ENCODE measurements at regions of chr1 and their contacts with region 1.

Region 1: DNA sequence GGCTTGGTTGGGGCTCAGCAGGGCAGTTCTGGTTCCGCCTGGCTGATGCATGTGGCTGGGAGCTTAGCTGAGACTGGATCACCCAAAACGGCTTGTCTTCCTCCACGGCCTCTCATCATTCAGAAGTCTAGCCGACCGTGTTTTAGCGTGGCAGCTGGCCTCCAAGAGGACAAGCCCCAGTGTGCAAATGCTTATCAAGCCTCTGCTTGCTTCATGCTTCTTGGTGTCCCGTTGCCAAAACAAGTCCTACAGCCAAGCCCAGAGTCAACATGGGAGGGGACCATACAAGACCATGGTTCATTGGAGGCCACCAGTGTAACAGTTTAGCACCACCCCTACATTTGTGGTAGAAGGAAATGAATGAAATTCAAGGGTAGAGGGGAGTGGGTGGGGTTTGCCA is 10.5 kb upstream of the KDF1 start:
- DNase-seq: no peak
- H3K4me3 ChIP-seq: no peak overlapping the region
- H3K27ac ChIP-seq: no peak overlapping the region
- H3K4me1 ChIP-seq: no peaks in the 10 kb centered on the region
- H3K27me3 ChIP-seq: peaks cover 0 to 47% of the 10 kb centered on the region in 2 donors
- CTCF ChIP-seq: no peak

Region 2: DNA sequence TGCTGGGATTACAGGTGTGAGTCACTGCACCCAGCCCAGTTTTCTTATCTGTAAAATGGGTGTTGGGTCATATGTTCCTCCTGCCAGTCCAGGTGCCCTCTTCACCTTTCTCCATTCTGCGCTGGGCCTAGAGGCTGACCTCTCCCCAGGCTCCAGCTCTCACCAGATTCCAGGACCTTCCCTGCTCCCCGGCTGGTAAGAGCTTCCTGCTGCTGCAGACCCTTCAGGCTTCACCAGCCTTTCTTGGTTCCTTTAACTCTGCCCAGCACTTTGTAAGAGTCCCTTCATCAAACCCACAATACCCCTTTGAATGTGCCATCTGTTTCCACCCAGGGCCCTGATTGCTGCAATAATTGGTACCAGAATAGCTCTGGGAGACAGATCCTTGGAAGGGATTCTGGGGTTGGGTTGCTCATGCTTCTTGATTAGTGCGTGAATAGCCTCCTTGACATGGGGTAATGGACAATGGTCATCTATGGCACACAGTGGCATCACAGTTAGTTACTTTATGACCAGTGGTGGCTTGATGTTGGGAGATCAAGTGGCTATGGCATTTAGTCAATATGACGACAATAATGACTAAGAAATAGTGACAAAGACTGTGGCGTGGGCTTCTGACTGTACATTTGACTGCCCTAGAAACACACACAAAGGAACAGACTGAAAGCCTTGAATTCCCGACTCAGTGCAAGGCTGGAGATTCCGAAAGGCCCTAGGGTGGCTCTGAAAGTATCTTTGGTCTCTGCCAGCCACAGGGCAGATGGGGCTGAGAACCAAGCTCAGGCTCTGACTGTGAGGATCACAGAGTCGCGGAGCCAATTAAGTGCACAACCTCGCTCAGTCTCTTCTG is 116.8 kb after region 1 on chr1:
- intact Hi-C with region 1: loop called (anchors 5 kb)
- DNase-seq: no peak
- H3K4me3 ChIP-seq: no peak overlapping the region
- H3K27ac ChIP-seq: no peak overlapping the region
- H3K4me1 ChIP-seq: no peaks in the 10 kb centered on the region
- H3K27me3 ChIP-seq: peaks cover 0 to 8% of the 10 kb centered on the region in 2 donors
- CTCF ChIP-seq: no peak

Region 3: DNA sequence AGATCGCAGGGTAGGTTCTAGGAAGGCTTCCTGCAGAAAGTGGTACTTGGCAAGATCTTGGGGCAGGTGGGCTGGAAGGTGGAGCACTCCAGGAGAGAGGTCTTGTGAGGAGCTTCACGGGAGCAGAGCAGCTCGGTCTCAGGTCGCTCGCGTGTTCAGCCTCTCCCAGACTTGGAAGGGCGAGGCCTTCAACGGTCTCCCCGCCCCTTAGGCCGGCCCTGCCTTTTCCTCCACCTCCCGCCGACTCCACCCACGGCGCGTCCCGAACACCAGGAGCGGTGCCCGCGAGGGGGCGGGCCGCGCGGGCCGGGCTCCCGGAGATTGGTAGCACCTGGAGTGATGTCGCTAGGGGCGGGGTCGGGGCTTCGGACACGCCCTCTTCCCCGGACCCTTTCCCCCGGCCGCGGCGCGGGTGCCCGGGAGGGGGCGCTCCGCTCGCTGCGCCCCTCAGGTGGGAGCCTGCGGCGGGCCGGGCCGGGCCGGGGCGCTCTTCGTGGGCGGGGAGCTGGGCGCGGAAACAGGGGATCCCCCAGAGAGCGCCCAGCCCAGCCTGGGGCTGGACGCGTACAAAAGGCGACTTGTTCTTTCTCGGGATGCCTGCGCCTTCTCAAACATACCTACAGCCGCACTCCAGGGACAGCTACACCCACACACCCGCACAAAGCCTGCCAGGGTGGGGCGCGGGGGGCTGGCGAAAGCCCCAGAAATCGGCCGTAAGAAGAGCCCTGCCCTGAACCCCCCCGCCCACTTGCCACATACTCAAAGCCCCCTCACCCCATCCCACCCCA is 597.7 kb after region 1 on chr1:
- intact Hi-C with region 1: no loop called
- DNase-seq: peak; percentile 96 to 99
- H3K4me3 ChIP-seq: peak overlapping the region; percentile 43 to 53
- H3K27ac ChIP-seq: peak overlapping the region; percentile 97 to 99
- H3K4me1 ChIP-seq: peaks cover 33 to 98% (median 97%) of the 10 kb centered on the region in 4 donors
- H3K27me3 ChIP-seq: no peaks in the 10 kb centered on the region
- CTCF ChIP-seq: peak; percentile 70 to 73